Activated CD4-positive, alpha-beta memory T cell treated with anti-CD3 and anti-CD28 coated beads for 36 hours (primary cell): ENCODE measurements at regions of chr21 and their contacts with region 1.

Region 1: GRCh38 chr21:34888569-34889319 is 160.4 kb downstream of the RUNX1 start:
- DNase-seq: peak; percentile 92
- H3K4me3 Mint-ChIP-seq: peak overlapping the region; percentile 89
- H3K27ac Mint-ChIP-seq: peak overlapping the region; percentile 100
- H3K4me1 Mint-ChIP-seq: peaks cover 44% of the 10 kb centered on the region
- H3K27me3 Mint-ChIP-seq: peaks cover 5% of the 10 kb centered on the region

Region 2: DNA sequence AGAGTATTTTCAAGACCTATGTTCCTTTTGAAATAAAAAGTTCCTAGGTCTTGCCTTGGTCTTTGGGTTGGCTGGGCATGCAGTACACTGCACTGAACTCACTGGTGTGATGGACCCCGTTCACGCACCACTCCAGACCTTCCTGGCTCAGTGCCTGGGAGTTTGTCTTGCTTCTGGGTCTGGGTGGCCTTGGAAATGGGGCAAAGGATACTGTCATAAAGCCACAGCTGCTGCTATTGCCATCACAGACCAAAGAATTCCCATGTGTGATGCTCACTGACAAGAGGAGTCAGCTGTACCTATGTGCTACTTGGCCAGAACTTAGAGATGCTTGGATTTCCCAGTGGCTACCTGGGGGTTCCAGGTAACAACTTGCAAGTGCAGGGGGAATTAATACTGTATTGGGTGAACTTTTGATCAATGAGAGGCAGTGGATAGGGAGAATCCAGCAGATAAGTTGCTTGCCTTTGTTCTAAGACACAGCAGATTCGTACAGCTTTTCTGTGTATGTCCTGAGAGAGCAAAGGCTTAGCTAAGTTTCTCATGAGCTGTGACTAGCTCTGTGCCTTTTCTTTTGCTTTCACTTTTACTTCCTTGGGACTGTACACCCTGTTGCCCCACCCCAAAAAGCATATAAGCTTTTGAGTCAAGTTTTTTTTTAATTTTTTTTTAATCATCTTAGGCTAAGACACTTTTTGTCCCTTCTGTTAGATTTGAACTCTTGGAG is 45.0 kb after region 1 on chr21:
- CTCF ChIA-PET with region 1: interaction called, 27 read pairs
- POLR2A ChIA-PET with region 1: interaction called, 71 read pairs
- intact Hi-C with region 1: loop called (anchors 2 kb)
- DNase-seq: peak; percentile 43
- H3K4me3 Mint-ChIP-seq: peak overlapping the region; percentile 77
- H3K27ac Mint-ChIP-seq: peak overlapping the region; percentile 97
- H3K4me1 Mint-ChIP-seq: peaks cover 83% of the 10 kb centered on the region
- H3K27me3 Mint-ChIP-seq: no peaks in the 10 kb centered on the region

Region 3: GRCh38 chr21:34974162-34974981 is 85.6 kb after region 1 on chr21:
- CTCF ChIA-PET with region 1: interaction called, 22 read pairs
- POLR2A ChIA-PET with region 1: interaction called, 85 read pairs
- intact Hi-C with region 1: no loop called
- DNase-seq: peak; percentile 72
- H3K4me3 Mint-ChIP-seq: peak overlapping the region; percentile 70
- H3K27ac Mint-ChIP-seq: peak overlapping the region; percentile 81
- H3K4me1 Mint-ChIP-seq: peaks cover 80% of the 10 kb centered on the region
- H3K27me3 Mint-ChIP-seq: no peaks in the 10 kb centered on the region

Region 4: GRCh38 chr21:35036465-35037383 is 148.0 kb after region 1 on chr21:
- CTCF ChIA-PET with region 1: interaction called, 120 read pairs
- POLR2A ChIA-PET with region 1: interaction called, 267 read pairs
- intact Hi-C with region 1: no loop called
- DNase-seq: peak; percentile 53
- H3K4me3 Mint-ChIP-seq: peak overlapping the region; percentile 62
- H3K27ac Mint-ChIP-seq: peak overlapping the region; percentile 91
- H3K4me1 Mint-ChIP-seq: peaks cover 95% of the 10 kb centered on the region
- H3K27me3 Mint-ChIP-seq: no peaks in the 10 kb centered on the region

Region 5: GRCh38 chr21:35138665-35139381 is 250.1 kb after region 1 on chr21:
- CTCF ChIA-PET with region 1: no interaction called
- POLR2A ChIA-PET with region 1: no interaction called
- intact Hi-C with region 1: loop called (anchors 2 kb)
- DNase-seq: peak; percentile 79
- H3K4me3 Mint-ChIP-seq: peak overlapping the region; percentile 68
- H3K27ac Mint-ChIP-seq: peak overlapping the region; percentile 90
- H3K4me1 Mint-ChIP-seq: peaks cover 29% of the 10 kb centered on the region
- H3K27me3 Mint-ChIP-seq: no peaks in the 10 kb centered on the region

Region 6: DNA sequence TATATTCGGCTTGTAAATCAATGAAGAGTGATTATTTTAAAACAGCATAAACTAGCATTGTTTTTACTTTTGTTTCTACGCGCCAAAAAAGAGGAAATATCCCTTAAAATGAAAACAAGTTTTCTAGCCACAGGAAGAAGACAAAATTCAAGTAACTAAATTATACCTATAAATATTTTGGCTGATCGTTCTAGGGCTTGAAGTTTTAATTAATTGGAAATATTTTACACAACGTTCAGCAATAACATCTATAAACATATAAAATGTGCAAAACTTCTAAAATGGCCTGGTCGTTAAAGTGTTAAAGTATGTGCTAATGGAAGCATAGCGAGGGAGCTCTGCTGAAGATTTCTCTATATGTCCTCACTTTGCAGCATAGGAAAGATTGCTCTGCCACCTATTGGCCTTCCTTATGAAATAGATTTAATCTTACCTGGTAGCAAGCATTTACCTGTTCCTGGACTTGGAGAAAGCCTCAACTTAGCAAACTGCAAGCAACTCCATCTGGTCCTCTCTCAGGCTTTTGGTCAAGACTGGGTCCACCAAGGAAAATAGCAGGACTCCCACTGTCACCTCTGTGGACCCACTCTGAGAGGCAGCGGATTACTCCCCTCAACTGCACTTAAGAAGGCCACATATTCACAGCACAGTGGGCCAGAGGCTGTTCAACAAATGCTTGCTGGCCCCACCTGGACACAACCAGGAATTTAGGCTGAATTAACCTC is 511.7 kb after region 1 on chr21:
- CTCF ChIA-PET with region 1: interaction called, 14 read pairs
- POLR2A ChIA-PET with region 1: interaction called, 3 read pairs
- intact Hi-C with region 1: loop called (anchors 2 kb)
- DNase-seq: peak; percentile 37
- H3K4me3 Mint-ChIP-seq: no peak overlapping the region
- H3K27ac Mint-ChIP-seq: no peak overlapping the region
- H3K4me1 Mint-ChIP-seq: peaks cover 24% of the 10 kb centered on the region
- H3K27me3 Mint-ChIP-seq: peaks cover 3% of the 10 kb centered on the region